HepG2 (cell line): ENCODE measurements at regions of chr12 and their contacts with region 1.

Region 1: DNA sequence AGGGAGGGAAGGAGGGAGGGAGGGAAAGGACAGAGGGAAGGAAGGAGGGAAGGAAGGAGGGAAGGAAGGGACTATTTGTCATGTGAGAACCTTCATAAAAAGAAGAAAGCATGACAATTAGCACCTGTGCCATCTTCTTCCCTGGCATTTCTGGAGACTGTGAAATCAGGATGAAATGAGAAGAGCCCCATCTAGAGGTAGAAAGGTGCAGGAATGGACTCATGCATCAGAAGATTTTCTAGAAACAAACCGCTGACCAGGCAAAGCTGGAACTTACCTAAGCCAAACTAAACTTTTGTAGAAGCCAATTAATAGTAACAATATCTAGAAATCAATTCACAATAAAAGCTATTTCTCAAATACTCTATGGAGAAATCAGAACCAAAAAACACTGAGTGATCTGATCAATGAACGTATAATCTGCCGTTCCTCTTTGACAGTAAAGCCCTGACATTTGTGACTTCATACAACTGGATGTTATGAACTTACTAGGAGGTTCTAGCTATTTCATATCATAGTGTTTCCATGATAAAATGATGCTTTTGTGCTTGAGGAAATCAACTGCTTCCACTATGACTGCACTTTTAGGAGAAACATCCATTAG is 24.4 kb upstream of the CRACR2A start:
- DNase-seq: peak; percentile 30
- ATAC-seq: peak; percentile 66
- H3K4me3 ChIP-seq: no peak overlapping the region
- H3K27ac ChIP-seq: no peak overlapping the region
- H3K4me1 ChIP-seq: no peaks in the 10 kb centered on the region
- H3K27me3 ChIP-seq: no peaks in the 10 kb centered on the region; a peak in 1 of 5 replicates
- CTCF ChIP-seq: peak; percentile 74
- EP300 ChIP-seq: no peak
- POLR2A ChIP-seq: no peak
- RAD21 ChIP-seq: no peak

Region 2: GRCh38 chr12:3896801-3897331 is 119.6 kb after region 1 on chr12:
- CTCF ChIA-PET with region 1: no interaction called
- POLR2A ChIA-PET with region 1: no interaction called
- in situ Hi-C with region 1: no loop called
- intact Hi-C with region 1: no loop called
- DNase-seq: no peak
- ATAC-seq: no peak
- H3K4me3 ChIP-seq: no peak overlapping the region
- H3K27ac ChIP-seq: no peak overlapping the region
- H3K4me1 ChIP-seq: no peaks in the 10 kb centered on the region
- H3K27me3 ChIP-seq: peaks cover 0 to 5% of the 10 kb centered on the region in 2 experiments; a peak in 1 of 5 replicates
- CTCF ChIP-seq: no peak
- EP300 ChIP-seq: no peak
- POLR2A ChIP-seq: no peak
- RAD21 ChIP-seq: no peak

Region 3: GRCh38 chr12:4153343-4153892 is 376.1 kb after region 1 on chr12:
- CTCF ChIA-PET with region 1: no interaction called
- POLR2A ChIA-PET with region 1: no interaction called
- in situ Hi-C with region 1: no loop called
- intact Hi-C with region 1: no loop called
- DNase-seq: no peak
- ATAC-seq: no peak
- H3K4me3 ChIP-seq: no peak overlapping the region
- H3K27ac ChIP-seq: no peak overlapping the region
- H3K4me1 ChIP-seq: no peaks in the 10 kb centered on the region
- H3K27me3 ChIP-seq: no peaks in the 10 kb centered on the region
- CTCF ChIP-seq: no peak
- EP300 ChIP-seq: no peak
- POLR2A ChIP-seq: no peak
- RAD21 ChIP-seq: no peak

Region 4: GRCh38 chr12:4164559-4165558 is 387.6 kb after region 1 on chr12:
- CTCF ChIA-PET with region 1: no interaction called
- POLR2A ChIA-PET with region 1: no interaction called
- in situ Hi-C with region 1: no loop called
- intact Hi-C with region 1: no loop called
- DNase-seq: no peak
- ATAC-seq: no peak
- H3K4me3 ChIP-seq: no peak overlapping the region
- H3K27ac ChIP-seq: no peak overlapping the region
- H3K4me1 ChIP-seq: no peaks in the 10 kb centered on the region
- H3K27me3 ChIP-seq: no peaks in the 10 kb centered on the region; a peak in 1 of 5 replicates
- CTCF ChIP-seq: no peak
- EP300 ChIP-seq: no peak
- POLR2A ChIP-seq: no peak
- RAD21 ChIP-seq: no peak

Region 5: DNA sequence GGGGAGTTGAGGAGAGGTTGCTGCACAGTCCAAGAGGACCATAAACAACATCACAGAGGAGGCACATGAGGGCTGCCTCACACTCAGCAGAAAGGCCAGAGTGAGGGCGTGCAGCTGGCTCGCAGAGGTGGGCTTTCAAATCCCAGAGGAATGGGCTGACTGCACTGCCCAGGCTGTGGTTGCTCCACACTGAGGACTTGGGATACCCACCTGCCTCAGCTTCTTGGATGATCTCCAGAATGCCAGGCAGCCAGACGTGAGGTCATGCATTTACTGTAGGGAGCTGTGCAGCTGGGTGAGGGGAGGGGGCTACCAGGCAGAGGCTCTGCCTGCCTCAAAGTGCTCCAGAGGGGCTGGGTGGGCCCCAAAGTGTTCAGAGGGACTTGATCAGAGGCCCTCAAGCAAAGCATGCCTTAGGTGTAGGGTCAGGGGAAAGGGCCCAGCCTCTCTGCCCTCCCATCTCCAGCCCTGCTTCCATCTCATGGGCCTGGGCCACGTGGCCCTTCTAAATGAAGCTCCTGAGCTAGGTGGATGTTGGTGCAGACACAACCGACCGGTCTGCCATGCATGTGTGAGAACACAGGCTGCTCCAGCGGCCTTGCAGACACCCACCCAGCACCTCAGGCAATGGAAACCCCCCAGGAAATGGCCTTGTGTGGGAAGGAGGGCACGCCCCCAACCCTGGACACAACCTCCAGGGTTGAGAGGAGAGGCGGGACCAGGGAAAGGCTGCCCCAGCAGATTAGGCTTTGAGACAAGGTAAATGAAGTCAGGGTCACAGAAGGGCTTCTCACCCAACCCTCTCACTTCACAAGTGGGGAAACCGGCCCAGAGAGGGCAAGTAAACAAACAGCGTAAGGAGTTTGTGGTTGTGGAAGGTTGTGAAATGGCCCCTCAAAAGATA is 1745.4 kb after region 1 on chr12:
- CTCF ChIA-PET with region 1: no interaction called
- POLR2A ChIA-PET with region 1: no interaction called
- in situ Hi-C with region 1: no loop called
- intact Hi-C with region 1: loop called (anchors 5 kb)
- DNase-seq: no peak
- ATAC-seq: no peak
- H3K4me3 ChIP-seq: no peak overlapping the region
- H3K27ac ChIP-seq: no peak overlapping the region
- H3K4me1 ChIP-seq: no peaks in the 10 kb centered on the region
- H3K27me3 ChIP-seq: 0 out of 5 replicates have a peak, but pooled peaks cover 0 to 3% of the 10 kb centered on the region in 2 experiments
- CTCF ChIP-seq: no peak
- EP300 ChIP-seq: no peak
- POLR2A ChIP-seq: no peak
- RAD21 ChIP-seq: no peak